ENCODE measurements at regions of chr12 and their contacts with region 1.

Region 1: DNA sequence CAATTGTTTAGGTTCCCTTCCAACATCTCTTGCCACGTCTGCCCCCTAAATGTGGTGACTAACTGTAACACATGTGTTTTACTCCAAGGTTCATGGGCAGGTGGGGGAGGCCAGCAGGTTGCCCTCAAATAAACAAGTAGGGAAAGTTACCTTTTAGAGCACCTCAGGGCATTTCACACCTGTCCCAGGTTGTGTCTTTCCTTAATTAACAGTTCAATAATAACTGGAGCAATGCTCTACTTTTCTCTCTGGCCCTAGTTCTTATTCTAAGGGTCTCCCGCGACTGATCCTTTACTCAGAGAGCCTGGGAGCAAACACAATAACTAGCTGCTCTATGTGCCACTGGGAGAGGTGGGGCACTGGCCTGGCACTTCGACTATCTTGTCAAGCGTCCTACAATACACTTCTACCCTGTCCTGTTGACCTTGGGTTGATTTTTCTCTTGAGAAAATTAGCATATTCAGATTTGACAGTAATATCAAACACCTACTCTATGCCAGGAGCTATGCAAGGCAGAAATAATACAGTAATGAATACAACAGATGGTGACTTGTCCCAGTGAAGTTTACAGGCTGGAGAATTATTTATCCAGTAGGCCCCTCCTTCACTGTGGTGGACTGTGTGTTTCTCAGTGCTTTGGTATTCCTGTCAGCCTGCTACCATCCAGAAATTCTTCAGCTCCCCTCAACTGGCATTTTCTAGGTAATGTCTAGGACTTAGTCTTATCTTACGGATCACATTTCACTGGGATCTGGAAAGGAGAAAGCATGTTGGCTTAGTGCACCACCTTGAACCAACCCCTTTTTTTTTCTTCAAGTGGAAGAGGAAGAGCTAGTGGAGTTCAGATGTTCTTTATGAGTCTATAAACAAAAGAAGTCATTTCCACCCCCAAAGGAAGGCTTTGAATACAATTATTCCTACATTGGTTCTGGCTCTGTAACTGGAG is 202.6 kb downstream of the CRADD start:
- DNase-seq: no peak
- ATAC-seq: peak; percentile 35 to 87 (median 74)
- H3K4me3 ChIP-seq: no peak overlapping the region
- H3K27ac ChIP-seq: peak overlapping the region in 7 of 10 donors; percentile 2 to 56 (median 24)
- H3K4me1 ChIP-seq: peaks cover 7 to 36% (median 14%) of the 10 kb centered on the region in 9 donors
- H3K27me3 ChIP-seq: no peaks in the 10 kb centered on the region
- CTCF ChIP-seq: no peak

Region 2: DNA sequence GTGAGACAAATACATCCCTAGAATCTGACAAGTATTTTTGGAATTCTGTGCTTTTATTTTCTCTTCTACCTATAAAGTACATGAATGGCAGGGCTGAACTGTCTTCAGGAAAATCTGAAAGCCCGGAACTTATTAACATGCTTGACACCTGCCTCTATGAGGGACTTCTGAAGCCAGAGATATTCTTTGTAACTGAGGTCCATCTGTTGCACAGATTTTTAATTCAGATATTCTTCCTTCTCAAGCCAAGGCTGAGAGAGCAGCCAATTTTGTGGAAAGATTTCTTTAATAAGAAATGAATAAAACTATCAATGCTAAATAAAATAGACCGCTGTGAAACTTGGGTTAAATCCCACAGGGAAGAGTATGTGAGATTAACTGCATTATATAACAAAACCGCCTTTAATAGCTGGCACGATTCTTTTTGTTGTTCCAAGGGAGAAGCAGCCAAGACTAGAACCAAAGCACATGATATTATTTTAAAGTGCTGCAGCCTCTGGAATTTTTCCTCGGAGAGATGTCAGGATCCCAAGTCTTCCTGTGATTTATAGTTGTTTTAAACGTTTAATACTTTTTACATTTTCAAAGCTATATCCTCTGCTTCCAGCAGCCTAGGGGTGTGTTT is 53.7 kb before region 1 on chr12:
- intact Hi-C with region 1: loop called in 1 of 10 experiments (anchors 10 kb)
- DNase-seq: no peak
- ATAC-seq: peak in 4 of 8 donors; percentile 26 to 56 (median 33)
- H3K4me3 ChIP-seq: peak overlapping the region in 1 of 10 donors; percentile 7
- H3K27ac ChIP-seq: peak overlapping the region; percentile 9 to 75 (median 52)
- H3K4me1 ChIP-seq: peaks cover 20 to 79% (median 51%) of the 10 kb centered on the region in 9 donors
- H3K27me3 ChIP-seq: no peaks in the 10 kb centered on the region
- CTCF ChIP-seq: no peak

Region 3: DNA sequence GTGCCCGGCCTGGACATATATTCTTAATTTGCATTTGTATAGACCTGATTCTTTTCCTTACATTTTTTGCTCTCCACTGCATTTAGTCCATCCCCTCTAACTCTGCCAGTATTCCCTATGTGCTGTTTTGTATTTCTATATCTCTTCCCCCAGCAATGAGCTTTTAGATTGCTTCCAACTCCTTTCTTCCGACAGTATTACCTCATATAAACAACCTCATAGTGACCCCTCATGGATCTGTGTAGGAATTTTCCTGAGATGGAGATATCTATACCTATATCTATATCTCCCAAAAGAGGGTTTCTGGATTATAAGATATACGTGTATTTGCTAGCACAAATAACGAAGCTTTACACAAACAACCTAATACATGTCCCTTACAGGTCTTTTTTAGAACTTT is 40.7 kb before region 1 on chr12:
- intact Hi-C with region 1: loop called in 1 of 10 experiments (anchors 5 kb)
- DNase-seq: no peak
- ATAC-seq: no peak
- H3K4me3 ChIP-seq: no peak overlapping the region
- H3K27ac ChIP-seq: no peak overlapping the region
- H3K4me1 ChIP-seq: peaks cover 0 to 44% (median 10%) of the 10 kb centered on the region in 9 donors
- H3K27me3 ChIP-seq: no peaks in the 10 kb centered on the region
- CTCF ChIP-seq: peak in 1 of 9 donors; percentile 10

Measured in heart right ventricle (tissue), 16 donors.